H1 (cell line): ENCODE measurements at regions of chr11 and their contacts with region 1.

Region 1: DNA sequence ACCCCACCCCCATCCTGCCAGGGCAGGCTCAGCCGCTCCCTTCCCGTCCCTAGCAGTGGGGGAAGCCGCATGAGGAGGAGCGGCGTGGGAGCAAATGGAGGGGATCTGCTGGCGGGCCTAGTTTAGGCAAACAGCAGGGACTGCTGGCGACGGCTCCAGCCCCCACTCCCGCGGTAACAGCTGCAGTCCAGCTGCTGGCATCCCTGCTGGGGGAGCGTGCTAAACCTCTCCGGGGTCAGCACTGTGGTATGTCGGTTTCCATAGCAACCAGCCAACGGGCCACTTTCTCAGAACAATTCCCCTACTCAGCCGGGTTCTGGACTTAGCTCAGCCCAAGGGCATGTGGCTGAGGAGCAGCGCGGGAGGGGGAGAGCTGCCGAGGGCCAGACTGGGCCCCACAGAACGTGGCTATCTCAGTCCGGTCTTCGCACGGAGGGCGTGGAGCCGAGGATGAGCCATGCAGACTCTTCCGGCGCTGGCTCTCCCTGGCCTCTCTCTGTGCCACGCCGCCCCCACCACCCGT is 98.8 kb downstream of the PKNOX2 start:
- DNase-seq: peak; percentile 87 to 94
- H3K4me3 ChIP-seq: peak overlapping the region in 3 of 4 experiments; percentile 14 to 47 (median 23); a peak in 5 of 8 replicates
- H3K27ac ChIP-seq: 0 out of 2 replicates have a peak overlapping the region, but pooled peaks have one; percentile 30
- H3K4me1 ChIP-seq: peaks cover 11 to 30% (median 23%) of the 10 kb centered on the region in 4 experiments
- H3K27me3 ChIP-seq: peaks cover 0 to 19% (median 14%) of the 10 kb centered on the region in 4 experiments; a peak in 5 of 7 replicates
- CTCF ChIP-seq: no peak
- EP300 ChIP-seq: peak; percentile 54 to 95; a peak in 2 of 3 replicates
- POLR2A ChIP-seq: no peak
- RAD21 ChIP-seq: peak in 1 of 2 experiments; percentile 15; a peak in 2 of 4 replicates

Region 2: DNA sequence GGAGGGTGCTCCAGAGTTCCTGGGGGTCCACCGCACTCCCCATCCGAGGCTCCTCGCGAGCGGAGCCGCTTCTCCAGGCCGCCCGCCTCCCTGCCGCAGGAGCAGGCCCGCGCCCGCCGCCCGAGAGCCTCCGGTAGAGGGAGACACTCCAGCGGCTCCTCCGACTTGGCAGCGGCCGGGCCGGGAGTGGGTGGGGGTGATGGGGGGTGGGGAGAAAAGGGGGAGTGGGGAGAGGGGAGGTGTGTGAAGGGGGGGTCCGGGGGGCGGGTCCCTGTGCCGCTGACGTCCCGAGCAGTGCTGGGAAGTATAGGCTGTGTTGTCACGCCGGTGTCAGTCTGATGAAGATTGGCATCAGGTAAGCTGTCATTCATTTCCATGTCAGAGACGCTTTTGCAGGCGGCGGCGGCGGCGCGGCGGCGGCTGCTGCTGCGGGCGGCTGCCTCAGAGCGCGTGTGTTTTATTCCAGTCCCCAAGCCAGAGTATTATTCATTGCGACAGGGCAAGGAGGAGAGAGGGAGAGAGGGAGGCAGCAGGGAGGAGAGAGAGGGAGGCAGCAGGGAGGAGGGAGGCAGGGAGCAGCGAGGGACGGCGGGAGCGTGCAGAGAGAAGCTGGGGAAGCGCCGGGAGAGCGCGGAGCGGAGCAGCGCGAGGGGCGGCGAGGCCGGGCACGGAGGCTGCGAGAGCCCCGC is 98.8 kb before region 1 on chr11 and contains the start of gene PKNOX2:
- CTCF ChIA-PET with region 1: interaction called, 10 read pairs
- POLR2A ChIA-PET with region 1: interaction called, 15 read pairs
- DNase-seq: peak in 1 of 2 experiments; percentile 93
- H3K4me3 ChIP-seq: peak within 1 kb of the TSS; percentile 52 to 74 (median 60)
- H3K27ac ChIP-seq: peak within 1 kb of the TSS; percentile 87
- H3K4me1 ChIP-seq: peaks cover 21 to 44% (median 29%) of the 10 kb centered on the region in 4 experiments
- H3K27me3 ChIP-seq: peaks cover 14 to 44% (median 40%) of the 10 kb centered on the region in 4 experiments
- CTCF ChIP-seq: peak; percentile 45 to 72 (median 67)
- EP300 ChIP-seq: peak in 1 of 2 experiments; percentile 6; a peak in 1 of 3 replicates
- POLR2A ChIP-seq: no peak
- RAD21 ChIP-seq: peak; percentile 54 to 68; a peak in 3 of 4 replicates
- total RNA-seq, gene PKNOX2: 1.9 and 2.0 TPM in 2 replicates

Region 3: GRCh38 chr11:125170510-125171031 is 92.8 kb before region 1 on chr11:
- CTCF ChIA-PET with region 1: interaction called, 4 read pairs
- POLR2A ChIA-PET with region 1: interaction called, 15 read pairs
- DNase-seq: no peak
- H3K4me3 ChIP-seq: peak overlapping the region in 1 of 4 experiments; percentile 7; a peak in 1 of 8 replicates
- H3K27ac ChIP-seq: no peak overlapping the region
- H3K4me1 ChIP-seq: peaks cover 19 to 50% (median 32%) of the 10 kb centered on the region in 4 experiments
- H3K27me3 ChIP-seq: peaks cover 14 to 43% (median 38%) of the 10 kb centered on the region in 4 experiments
- CTCF ChIP-seq: no peak
- EP300 ChIP-seq: no peak
- POLR2A ChIP-seq: no peak
- RAD21 ChIP-seq: no peak

Region 4: DNA sequence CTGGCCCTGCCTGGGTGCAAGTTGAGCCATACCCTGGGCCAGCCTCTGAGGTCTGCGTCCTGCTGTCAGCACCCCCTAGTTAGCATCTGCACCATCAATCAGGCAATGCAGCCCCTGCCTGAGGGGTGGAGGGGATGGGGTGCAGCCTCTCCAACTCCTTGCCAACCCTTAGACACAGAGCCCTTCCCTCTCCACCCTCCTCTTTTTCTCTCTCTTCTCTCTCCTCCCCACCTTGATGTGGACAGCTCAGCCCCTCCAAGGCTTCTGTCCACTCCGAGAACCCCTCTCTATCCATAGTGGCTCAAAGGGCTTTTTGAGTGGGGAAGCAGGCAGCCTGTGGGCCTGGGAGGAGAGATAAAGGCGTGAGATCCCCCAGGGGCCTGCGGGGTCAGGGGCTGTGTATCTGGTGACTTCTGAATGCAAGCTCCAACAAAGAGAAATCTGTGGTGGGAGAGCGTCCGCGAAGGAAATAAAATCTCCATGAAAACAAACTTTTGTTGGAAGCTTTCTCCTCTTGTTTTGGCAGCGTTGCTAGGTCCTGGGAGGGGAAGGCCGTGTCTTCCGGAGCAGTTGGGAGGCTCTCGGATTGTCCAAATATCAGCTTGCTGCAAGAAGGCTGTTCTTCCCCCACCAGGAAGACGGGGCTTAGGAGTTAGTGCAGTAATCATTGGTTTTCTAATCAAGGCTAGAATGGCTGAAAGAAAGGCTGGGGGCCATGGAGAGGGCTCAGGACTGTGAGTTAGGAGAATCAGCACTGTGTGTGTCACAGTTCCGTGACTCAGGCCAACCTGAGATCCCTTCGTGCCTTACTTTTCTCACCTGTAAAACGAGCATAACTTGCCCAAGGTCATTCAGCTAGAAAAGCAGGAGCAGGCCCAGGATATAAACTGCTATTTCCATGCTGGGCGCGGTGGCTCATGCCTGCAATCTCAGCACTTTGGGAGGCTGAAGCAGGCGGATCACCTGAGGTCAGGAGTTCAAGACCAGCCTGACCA is 48.5 kb before region 1 on chr11:
- CTCF ChIA-PET with region 1: interaction called, 22 read pairs
- POLR2A ChIA-PET with region 1: no interaction called
- DNase-seq: no peak
- H3K4me3 ChIP-seq: no peak overlapping the region
- H3K27ac ChIP-seq: no peak overlapping the region; the same call in 1 of the 2 replicates
- H3K4me1 ChIP-seq: peaks cover 8 to 24% (median 14%) of the 10 kb centered on the region in 4 experiments
- H3K27me3 ChIP-seq: no peaks in the 10 kb centered on the region; a peak in 2 of 7 replicates
- CTCF ChIP-seq: no peak
- EP300 ChIP-seq: no peak
- POLR2A ChIP-seq: no peak
- RAD21 ChIP-seq: no peak

Region 5: GRCh38 chr11:125281831-125282595 is 18.7 kb after region 1 on chr11:
- CTCF ChIA-PET with region 1: interaction called, 24 read pairs
- POLR2A ChIA-PET with region 1: interaction called, 4 read pairs
- DNase-seq: no peak
- H3K4me3 ChIP-seq: no peak overlapping the region
- H3K27ac ChIP-seq: no peak overlapping the region
- H3K4me1 ChIP-seq: peaks cover 0 to 9% (median 3%) of the 10 kb centered on the region in 4 experiments; a peak in 3 of 7 replicates
- H3K27me3 ChIP-seq: no peaks in the 10 kb centered on the region
- CTCF ChIP-seq: no peak
- EP300 ChIP-seq: no peak
- POLR2A ChIP-seq: no peak
- RAD21 ChIP-seq: no peak